ENCODE measurements at regions of chr11 and their contacts with region 1.

Region 1: GRCh38 chr11:3773180-3773579 is 24.2 kb downstream of the NUP98 start:
- DNase-seq: no peak
- H3K4me3 ChIP-seq: no peak overlapping the region
- H3K4me3 Mint-ChIP-seq: no peak overlapping the region
- H3K27ac ChIP-seq: no peak overlapping the region
- H3K27ac Mint-ChIP-seq: no peak overlapping the region
- H3K4me1 ChIP-seq: no peaks in the 10 kb centered on the region
- H3K4me1 Mint-ChIP-seq: no peaks in the 10 kb centered on the region
- H3K27me3 ChIP-seq: no peaks in the 10 kb centered on the region
- H3K27me3 Mint-ChIP-seq: no peaks in the 10 kb centered on the region
- CTCF ChIP-seq: no peak

Region 2: GRCh38 chr11:3631331-3631730 is 141.8 kb before region 1 on chr11:
- intact Hi-C with region 1: no loop called
- DNase-seq: no peak
- H3K4me3 ChIP-seq: no peak overlapping the region
- H3K4me3 Mint-ChIP-seq: no peak overlapping the region
- H3K27ac ChIP-seq: no peak overlapping the region
- H3K27ac Mint-ChIP-seq: no peak overlapping the region
- H3K4me1 ChIP-seq: peaks cover 4 to 7% of the 10 kb centered on the region in 2 donors
- H3K4me1 Mint-ChIP-seq: peaks cover 10% of the 10 kb centered on the region
- H3K27me3 ChIP-seq: no peaks in the 10 kb centered on the region
- H3K27me3 Mint-ChIP-seq: peaks cover 0 to 5% (median 1%) of the 10 kb centered on the region in 3 donors
- CTCF ChIP-seq: no peak

Region 3: GRCh38 chr11:3807909-3808860 is 35.0 kb after region 1 on chr11 and contains the start of gene PGAP2:
- intact Hi-C with region 1: loop called in 1 of 2 experiments (anchors 5 kb)
- DNase-seq: peak; percentile 48 to 66 (median 58)
- H3K4me3 ChIP-seq: peak within 1 kb of the TSS; percentile 76 to 99 (median 96)
- H3K4me3 Mint-ChIP-seq: peak within 1 kb of the TSS; percentile 99 to 100
- H3K27ac ChIP-seq: peak within 1 kb of the TSS; percentile 42 to 80
- H3K27ac Mint-ChIP-seq: peak within 1 kb of the TSS; percentile 85 to 95 (median 94)
- H3K4me1 ChIP-seq: peaks cover 10 to 14% of the 10 kb centered on the region in 2 donors
- H3K4me1 Mint-ChIP-seq: peaks cover 13% of the 10 kb centered on the region
- H3K27me3 ChIP-seq: no peaks in the 10 kb centered on the region
- H3K27me3 Mint-ChIP-seq: no peaks in the 10 kb centered on the region
- CTCF ChIP-seq: peak; percentile 84
- polyA plus RNA-seq, gene PGAP2: 5.8 to 17.9 (median 6.8) TPM